ENCODE measurements at regions of chr6 and their contacts with region 1.

Region 1: GRCh38 chr6:14711056-14711703 is 534.7 kb upstream of the JARID2 start:
- DNase-seq: peak; percentile 74
- ATAC-seq: peak; percentile 88
- H3K4me3 Mint-ChIP-seq: no peak overlapping the region
- H3K27ac Mint-ChIP-seq: peak overlapping the region; percentile 72
- H3K4me1 Mint-ChIP-seq: peaks cover 16% of the 10 kb centered on the region
- H3K27me3 Mint-ChIP-seq: no peaks in the 10 kb centered on the region

Region 2: GRCh38 chr6:14210663-14211561 is 500.3 kb before region 1 on chr6:
- CTCF ChIA-PET with region 1: interaction called, 19 read pairs
- POLR2A ChIA-PET with region 1: no interaction called
- DNase-seq: peak; percentile 91
- ATAC-seq: peak; percentile 93
- H3K4me3 Mint-ChIP-seq: peak overlapping the region; percentile 80
- H3K27ac Mint-ChIP-seq: peak overlapping the region; percentile 85
- H3K4me1 Mint-ChIP-seq: peaks cover 19% of the 10 kb centered on the region
- H3K27me3 Mint-ChIP-seq: no peaks in the 10 kb centered on the region

Region 3: GRCh38 chr6:14728396-14729024 is 17.3 kb after region 1 on chr6:
- CTCF ChIA-PET with region 1: interaction called, 15 read pairs
- POLR2A ChIA-PET with region 1: no interaction called
- DNase-seq: no peak
- ATAC-seq: no peak
- H3K4me3 Mint-ChIP-seq: no peak overlapping the region
- H3K27ac Mint-ChIP-seq: no peak overlapping the region
- H3K4me1 Mint-ChIP-seq: peaks cover 47% of the 10 kb centered on the region
- H3K27me3 Mint-ChIP-seq: no peaks in the 10 kb centered on the region

Measured in activated CD8-positive, alpha-beta T cell treated with anti-CD3 and anti-CD28 coated beads, Interleukin-2, amount 10 ng/mL, durations not matched to agents 7 days and 5 days (primary cell).